ENCODE measurements at regions of chrX and their contacts with region 1.

Region 1: GRCh38 chrX:23883737-23884354 is 23.9 kb downstream of the APOO start:
- DNase-seq: no peak
- H3K4me3 ChIP-seq: no peak overlapping the region
- H3K27ac ChIP-seq: peak overlapping the region; percentile 45 to 55 (median 50)
- H3K4me1 ChIP-seq: peaks cover 0 to 20% (median 13%) of the 10 kb centered on the region in 4 donors
- H3K27me3 ChIP-seq: no peaks in the 10 kb centered on the region
- CTCF ChIP-seq: no peak
- EP300 ChIP-seq: no peak
- POLR2A ChIP-seq: no peak

Region 2: GRCh38 chrX:23782863-23783568 is 100.8 kb before region 1 on chrX and contains the start of gene SAT1:
- in situ Hi-C with region 1: loop called in 1 of 4 experiments (anchors 25 kb)
- intact Hi-C with region 1: no loop called
- DNase-seq: peak; percentile 96
- H3K4me3 ChIP-seq: peak within 1 kb of the TSS; percentile 48 to 81 (median 76)
- H3K27ac ChIP-seq: peak within 1 kb of the TSS; percentile 83 to 97 (median 97)
- H3K4me1 ChIP-seq: peaks cover 0 to 15% (median 0%) of the 10 kb centered on the region in 4 donors
- H3K27me3 ChIP-seq: no peaks in the 10 kb centered on the region
- CTCF ChIP-seq: peak; percentile 68 to 89 (median 74)
- EP300 ChIP-seq: no peak
- POLR2A ChIP-seq: peak; percentile 99
- total RNA-seq, gene SAT1: 313 to 1,184 (median 689) TPM

Region 3: GRCh38 chrX:24169211-24169610 is 285.4 kb after region 1 on chrX:
- in situ Hi-C with region 1: no loop called
- intact Hi-C with region 1: no loop called
- DNase-seq: no peak
- H3K4me3 ChIP-seq: no peak overlapping the region
- H3K27ac ChIP-seq: no peak overlapping the region
- H3K4me1 ChIP-seq: peaks cover 22 to 59% (median 34%) of the 10 kb centered on the region in 4 donors
- H3K27me3 ChIP-seq: no peaks in the 10 kb centered on the region
- CTCF ChIP-seq: no peak
- EP300 ChIP-seq: no peak
- POLR2A ChIP-seq: no peak

Region 4: GRCh38 chrX:24619647-24620046 is 735.8 kb after region 1 on chrX:
- in situ Hi-C with region 1: no loop called
- intact Hi-C with region 1: no loop called
- DNase-seq: no peak
- H3K4me3 ChIP-seq: no peak overlapping the region
- H3K27ac ChIP-seq: no peak overlapping the region
- H3K4me1 ChIP-seq: no peaks in the 10 kb centered on the region
- H3K27me3 ChIP-seq: no peaks in the 10 kb centered on the region
- CTCF ChIP-seq: no peak
- EP300 ChIP-seq: no peak
- POLR2A ChIP-seq: no peak